ENCODE measurements at regions of chr17 and their contacts with region 1.

Region 1: GRCh38 chr17:74099442-74100340 is 103.8 kb upstream of the RPL38 start:
- DNase-seq: no peak
- H3K4me3 ChIP-seq: no peak overlapping the region
- H3K27ac ChIP-seq: no peak overlapping the region
- H3K4me1 ChIP-seq: no peaks in the 10 kb centered on the region
- H3K27me3 ChIP-seq: peaks cover 6% of the 10 kb centered on the region
- CTCF ChIP-seq: no peak

Region 2: GRCh38 chr17:73798111-73798748 is 301.5 kb before region 1 on chr17:
- CTCF ChIA-PET with region 1: no interaction called
- POLR2A ChIA-PET with region 1: no interaction called
- intact Hi-C with region 1: no loop called
- DNase-seq: no peak
- H3K4me3 ChIP-seq: no peak overlapping the region
- H3K27ac ChIP-seq: no peak overlapping the region
- H3K4me1 ChIP-seq: no peaks in the 10 kb centered on the region
- H3K27me3 ChIP-seq: no peaks in the 10 kb centered on the region
- CTCF ChIP-seq: no peak

Region 3: DNA sequence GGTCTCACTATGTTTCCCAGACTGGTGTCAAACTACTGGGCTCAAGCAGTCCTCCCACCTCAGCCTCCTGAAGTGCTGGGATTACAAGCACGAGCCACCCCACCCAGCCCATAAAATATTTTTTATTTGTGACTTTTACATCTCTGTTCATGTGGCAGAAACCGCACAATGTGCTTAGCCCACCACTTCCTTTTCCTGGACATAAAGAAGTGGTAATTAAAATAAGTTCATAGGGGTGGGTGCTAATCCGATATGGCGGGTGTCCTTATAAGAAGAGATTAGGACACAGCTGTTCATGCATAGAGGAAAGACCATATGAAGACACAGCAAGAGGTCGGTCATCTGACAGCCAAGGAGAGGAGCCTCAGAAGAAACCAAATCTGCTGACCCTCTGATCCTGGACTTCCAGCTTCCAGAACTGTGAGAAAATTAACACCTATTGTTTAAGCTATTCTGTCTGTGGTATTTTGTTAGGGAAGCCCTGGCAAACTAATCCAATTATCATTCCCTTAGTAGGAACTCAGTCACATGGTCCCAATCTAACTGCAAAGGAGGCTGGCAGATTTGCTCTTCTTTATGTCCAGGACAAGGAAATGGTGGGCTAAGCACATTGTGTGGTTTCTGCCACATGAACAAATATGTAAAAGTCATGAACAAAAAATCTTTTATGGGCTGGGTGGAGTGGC is 175.0 kb before region 1 on chr17:
- CTCF ChIA-PET with region 1: no interaction called
- POLR2A ChIA-PET with region 1: interaction called, 10 read pairs
- intact Hi-C with region 1: no loop called
- DNase-seq: peak; percentile 65
- H3K4me3 ChIP-seq: no peak overlapping the region
- H3K27ac ChIP-seq: no peak overlapping the region
- H3K4me1 ChIP-seq: peaks cover 5% of the 10 kb centered on the region
- H3K27me3 ChIP-seq: no peaks in the 10 kb centered on the region
- CTCF ChIP-seq: no peak